ENCODE measurements at regions of chr22 and their contacts with region 1.

Region 1: DNA sequence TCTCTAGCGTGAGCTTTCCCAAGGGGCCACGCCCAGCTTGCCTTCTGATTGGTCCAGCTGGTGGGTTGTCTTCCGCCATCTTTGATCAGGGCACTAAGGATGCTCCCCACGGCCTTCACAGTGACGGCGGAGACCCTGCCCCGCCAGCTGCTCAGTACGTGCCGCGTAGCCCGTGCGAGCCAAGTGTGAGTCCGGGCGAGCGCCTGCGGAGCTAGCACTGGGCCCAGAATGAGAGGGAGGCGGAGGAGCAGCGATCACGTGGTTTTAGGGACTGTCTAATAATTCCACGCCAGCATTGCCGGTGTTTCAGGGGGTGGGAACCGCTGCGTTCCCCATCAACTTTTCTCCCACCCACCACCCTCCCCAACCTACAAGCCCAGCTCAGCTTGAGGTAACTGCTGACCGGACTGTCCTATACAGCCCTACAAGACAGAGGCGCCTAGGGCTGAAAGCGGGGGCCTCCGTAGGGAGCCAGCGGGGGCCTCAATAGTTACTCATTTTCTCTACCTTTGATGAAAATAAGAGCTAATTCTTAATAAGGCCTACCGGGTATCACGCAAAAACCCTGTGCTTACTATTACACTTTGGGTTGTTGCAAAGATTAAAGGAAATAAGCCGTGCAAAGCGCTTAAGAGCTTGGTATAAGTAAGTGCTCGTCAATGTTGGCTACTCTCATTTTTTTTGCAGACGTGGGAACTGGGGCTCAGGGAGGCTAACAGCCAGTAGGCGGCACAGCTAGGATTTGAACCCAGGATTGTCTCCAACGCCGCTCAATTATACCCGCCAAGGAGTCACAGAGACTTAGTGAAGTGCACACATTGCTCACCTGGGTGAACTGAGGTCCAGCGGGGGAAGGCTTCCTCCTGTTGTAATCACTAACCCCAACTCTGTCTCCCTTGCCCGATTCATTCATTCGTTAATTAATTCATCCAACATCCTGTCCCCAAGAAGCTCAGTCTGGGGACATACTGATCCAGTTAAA is 1.3 kb upstream of the MTFP1 start:
- DNase-seq: peak; percentile 98
- ATAC-seq: peak; percentile 78
- H3K4me3 Mint-ChIP-seq: peak overlapping the region; percentile 83
- H3K27ac Mint-ChIP-seq: peak overlapping the region; percentile 99
- H3K4me1 Mint-ChIP-seq: peaks cover 32% of the 10 kb centered on the region
- H3K27me3 Mint-ChIP-seq: no peaks in the 10 kb centered on the region; the same call in 1 of the 2 replicates
- CTCF ChIP-seq: no peak

Region 2: GRCh38 chr22:30326706-30327362 is 97.4 kb before region 1 on chr22 and contains the start of gene TBC1D10A:
- CTCF ChIA-PET with region 1: interaction called, 16 read pairs
- POLR2A ChIA-PET with region 1: no interaction called
- DNase-seq: peak; percentile 95
- ATAC-seq: peak; percentile 93
- H3K4me3 Mint-ChIP-seq: peak within 1 kb of the TSS; percentile 75
- H3K27ac Mint-ChIP-seq: peak within 1 kb of the TSS; percentile 89
- H3K4me1 Mint-ChIP-seq: peaks cover 28% of the 10 kb centered on the region
- H3K27me3 Mint-ChIP-seq: no peaks in the 10 kb centered on the region
- CTCF ChIP-seq: no peak
- total RNA-seq, gene TBC1D10A: 7.5 to 11.1 TPM (median 9.6 TPM) in 3 replicates

Region 3: DNA sequence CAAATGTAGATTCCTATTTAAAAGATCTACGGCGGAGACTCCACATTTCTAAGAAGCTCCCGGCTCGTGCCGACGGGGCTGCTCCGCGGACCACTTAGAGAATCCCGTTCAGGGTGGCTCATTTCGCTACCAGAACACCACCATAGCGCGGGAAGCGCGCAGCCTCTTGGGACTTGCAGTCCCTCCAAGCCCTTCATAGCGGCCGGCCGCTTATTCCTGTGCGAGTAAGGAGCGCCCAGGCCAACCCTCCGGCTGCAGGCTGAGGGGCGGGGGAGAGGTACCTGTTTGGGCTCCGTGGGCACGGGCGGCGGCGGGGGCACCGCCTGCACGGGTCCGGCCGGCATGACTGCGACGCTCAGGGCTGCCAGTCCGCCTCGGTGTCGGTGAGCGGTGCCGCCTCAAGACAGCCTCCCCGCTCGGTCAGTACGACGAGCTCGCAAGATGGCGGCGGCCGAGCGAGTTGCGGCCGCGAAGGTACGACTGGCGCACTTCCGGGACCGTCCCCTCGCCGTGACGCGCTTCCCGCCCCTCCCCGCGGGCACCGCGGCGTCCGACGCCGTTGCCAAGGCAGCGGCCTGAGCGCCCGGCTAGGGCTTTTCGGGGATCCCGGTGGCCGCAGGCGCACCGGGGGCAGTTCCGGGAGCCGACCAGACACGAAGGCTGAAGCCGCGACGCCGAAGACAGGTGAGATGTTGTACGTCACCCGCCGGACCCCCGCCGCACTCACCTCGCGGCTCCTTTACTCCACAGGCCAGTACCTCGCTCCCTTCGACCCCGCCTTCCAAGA is 67.6 kb before region 1 on chr22 and contains the starts of genes CCDC157 and SF3A1:
- CTCF ChIA-PET with region 1: interaction called, 6 read pairs
- POLR2A ChIA-PET with region 1: interaction called, 19 read pairs
- DNase-seq: peak; percentile 91
- ATAC-seq: peak; percentile 90
- H3K4me3 Mint-ChIP-seq: peak within 1 kb of the TSS; percentile 95
- H3K27ac Mint-ChIP-seq: peak within 1 kb of the TSS; percentile 95
- H3K4me1 Mint-ChIP-seq: peaks cover 20% of the 10 kb centered on the region
- H3K27me3 Mint-ChIP-seq: no peaks in the 10 kb centered on the region
- CTCF ChIP-seq: no peak
- total RNA-seq, gene CCDC157: 3.8 to 6.5 TPM (median 4.2 TPM) in 3 replicates
- total RNA-seq, gene SF3A1: 214 to 272 TPM (median 227 TPM) in 3 replicates

Region 4: GRCh38 chr22:30396871-30397655 is 27.2 kb before region 1 on chr22 and contains the start of gene SEC14L2:
- CTCF ChIA-PET with region 1: interaction called, 149 read pairs
- POLR2A ChIA-PET with region 1: interaction called, 35 read pairs
- DNase-seq: peak; percentile 76
- ATAC-seq: peak; percentile 84
- H3K4me3 Mint-ChIP-seq: peak within 1 kb of the TSS; percentile 85
- H3K27ac Mint-ChIP-seq: no peak within 1 kb of the TSS
- H3K4me1 Mint-ChIP-seq: peaks cover 37% of the 10 kb centered on the region
- H3K27me3 Mint-ChIP-seq: peaks cover 64% of the 10 kb centered on the region
- CTCF ChIP-seq: no peak
- total RNA-seq, gene SEC14L2: 2.4 to 3.9 TPM (median 3.9 TPM) in 3 replicates

Region 5: GRCh38 chr22:30413745-30414524 is 10.3 kb before region 1 on chr22:
- CTCF ChIA-PET with region 1: interaction called, 21 read pairs
- POLR2A ChIA-PET with region 1: interaction called, 4 read pairs
- DNase-seq: no peak
- ATAC-seq: no peak
- H3K4me3 Mint-ChIP-seq: no peak overlapping the region
- H3K27ac Mint-ChIP-seq: no peak overlapping the region
- H3K4me1 Mint-ChIP-seq: no peaks in the 10 kb centered on the region
- H3K27me3 Mint-ChIP-seq: no peaks in the 10 kb centered on the region
- CTCF ChIP-seq: no peak

Region 6: DNA sequence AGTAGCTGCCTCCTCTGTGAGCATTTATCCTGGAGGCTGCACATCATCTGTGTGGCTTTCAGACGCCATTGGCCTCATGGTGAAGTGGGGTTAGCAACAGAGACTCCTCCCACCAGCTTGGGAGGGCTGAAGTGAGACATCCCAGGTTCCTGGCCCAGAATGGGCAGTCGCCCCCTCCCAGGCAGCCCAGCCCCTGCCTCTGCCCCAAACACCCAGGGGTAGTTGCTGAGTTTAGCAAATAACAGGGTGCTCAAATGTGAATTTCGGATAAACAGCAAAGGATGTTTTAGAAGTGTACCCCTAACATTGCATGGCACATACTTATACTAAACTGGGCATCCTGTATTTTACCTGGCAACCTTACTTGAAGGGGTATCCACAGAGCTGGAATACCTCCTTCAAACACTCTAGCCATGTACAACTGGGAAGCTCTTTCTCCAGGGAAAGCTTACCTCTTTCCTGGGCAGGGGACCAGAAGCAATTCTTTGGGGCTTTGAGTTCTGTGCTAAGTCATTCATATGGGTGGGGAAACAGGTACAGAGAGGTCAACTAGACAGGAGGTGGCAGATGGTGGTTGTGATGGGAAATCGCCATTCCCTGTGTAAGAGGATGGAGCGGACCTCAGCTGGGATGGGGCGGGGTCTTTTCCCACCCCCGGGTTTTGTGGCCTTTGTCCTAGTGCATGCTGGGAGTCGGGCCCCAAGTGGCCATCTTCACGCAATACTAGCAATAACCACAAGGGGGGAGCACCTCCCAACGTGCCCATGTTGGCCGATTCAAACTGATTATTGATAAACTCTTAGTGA is 20.6 kb after region 1 on chr22:
- CTCF ChIA-PET with region 1: interaction called, 23 read pairs
- POLR2A ChIA-PET with region 1: no interaction called
- DNase-seq: peak; percentile 85
- ATAC-seq: peak; percentile 90
- H3K4me3 Mint-ChIP-seq: peak overlapping the region; percentile 56
- H3K27ac Mint-ChIP-seq: no peak overlapping the region
- H3K4me1 Mint-ChIP-seq: peaks cover 7% of the 10 kb centered on the region
- H3K27me3 Mint-ChIP-seq: no peaks in the 10 kb centered on the region; the same call in 1 of the 2 replicates
- CTCF ChIP-seq: peak; percentile 91

Region 7: GRCh38 chr22:30485362-30485988 is 61.2 kb after region 1 on chr22:
- CTCF ChIA-PET with region 1: interaction called, 12 read pairs
- POLR2A ChIA-PET with region 1: no interaction called
- DNase-seq: peak; percentile 84
- ATAC-seq: peak; percentile 96
- H3K4me3 Mint-ChIP-seq: no peak overlapping the region
- H3K27ac Mint-ChIP-seq: no peak overlapping the region
- H3K4me1 Mint-ChIP-seq: no peaks in the 10 kb centered on the region
- H3K27me3 Mint-ChIP-seq: peaks cover 2% of the 10 kb centered on the region; the same call in 1 of the 2 replicates
- CTCF ChIP-seq: peak; percentile 98